ENCODE measurements at regions of chr14 and their contacts with region 1.

Region 1: DNA sequence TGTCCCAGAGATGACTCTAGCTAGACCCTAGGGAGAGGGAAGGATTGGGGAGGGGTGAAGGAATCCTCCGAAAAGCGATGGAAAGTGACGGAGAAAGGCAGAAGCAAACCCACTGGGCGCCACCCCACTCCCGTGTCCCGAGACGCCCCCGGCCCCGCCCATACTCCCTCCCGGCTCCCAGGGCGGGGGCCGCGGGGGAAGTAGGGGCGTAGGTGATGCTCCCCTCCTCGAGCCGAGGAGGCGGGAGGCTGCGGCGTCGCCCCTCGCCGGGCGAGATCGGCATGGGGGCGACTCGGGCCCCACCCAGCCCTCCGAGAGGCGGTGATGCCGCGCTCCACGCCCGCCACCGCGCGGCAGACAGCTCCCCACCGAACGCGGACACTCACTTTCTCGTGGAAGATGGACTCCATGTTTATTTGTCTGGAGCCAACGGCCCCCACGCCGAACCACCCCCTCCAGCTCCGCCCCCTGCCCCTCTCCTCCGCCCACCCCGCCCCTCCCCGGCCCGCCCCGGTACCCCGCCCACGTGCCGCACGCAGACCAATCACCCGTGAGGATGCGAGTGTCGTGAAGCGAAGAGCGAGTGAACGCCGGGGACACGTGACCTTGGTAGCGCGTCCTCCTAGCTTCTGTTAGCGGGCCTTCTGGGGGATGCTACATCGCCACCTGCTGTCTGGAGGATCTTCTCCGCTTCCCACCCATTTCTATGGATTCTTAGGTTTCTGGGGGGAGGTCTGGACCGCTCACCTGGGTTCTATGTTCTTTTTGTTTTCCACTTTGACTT is at the start of gene ATXN3:
- DNase-seq: peak; percentile 98
- ATAC-seq: peak; percentile 97
- H3K4me3 Mint-ChIP-seq: peak within 1 kb of the TSS; percentile 91
- H3K27ac Mint-ChIP-seq: peak within 1 kb of the TSS; percentile 89
- H3K4me1 Mint-ChIP-seq: peaks cover 36% of the 10 kb centered on the region
- H3K27me3 Mint-ChIP-seq: no peaks in the 10 kb centered on the region
- total RNA-seq, gene ATXN3: 26.6 to 30.2 TPM

Region 2: DNA sequence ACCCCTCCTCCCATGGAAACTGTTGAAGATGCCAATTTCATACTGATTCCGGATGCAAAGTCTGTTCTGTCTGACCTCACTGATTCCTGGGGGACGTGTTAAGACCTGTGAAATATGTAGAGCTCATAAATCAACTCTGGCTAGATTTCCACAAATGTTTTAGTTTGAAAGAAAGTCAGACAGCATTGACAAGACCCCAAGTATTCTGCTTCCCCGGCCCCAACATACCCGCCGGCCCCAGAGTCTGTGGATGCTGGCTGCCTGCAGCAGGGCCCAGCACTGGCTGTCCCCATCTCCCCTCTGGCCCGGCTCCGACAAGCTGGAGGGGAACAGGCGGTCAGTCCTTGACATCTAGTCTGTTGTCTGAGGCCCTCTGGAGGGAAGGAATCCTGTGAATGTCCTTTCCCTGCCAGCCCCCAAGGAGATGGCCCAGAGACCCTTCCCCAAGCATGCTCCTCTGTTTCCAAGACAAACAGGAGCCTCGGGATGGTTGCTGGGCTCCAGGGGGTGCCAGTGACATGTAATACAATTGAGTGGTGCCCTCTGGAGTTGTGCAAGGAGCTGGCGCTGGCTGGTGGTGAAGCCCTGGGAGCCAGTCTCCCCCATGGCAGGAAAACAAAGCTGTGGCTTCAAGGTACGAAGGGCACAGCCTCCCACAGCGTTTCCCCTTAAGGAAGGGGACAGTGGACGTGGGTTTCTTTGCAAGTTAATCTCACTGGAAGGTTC is 181.2 kb before region 1 on chr14:
- CTCF ChIA-PET with region 1: no interaction called
- DNase-seq: no peak
- ATAC-seq: no peak
- H3K4me3 Mint-ChIP-seq: no peak overlapping the region
- H3K27ac Mint-ChIP-seq: no peak overlapping the region
- H3K4me1 Mint-ChIP-seq: no peaks in the 10 kb centered on the region
- H3K27me3 Mint-ChIP-seq: no peaks in the 10 kb centered on the region

Region 3: DNA sequence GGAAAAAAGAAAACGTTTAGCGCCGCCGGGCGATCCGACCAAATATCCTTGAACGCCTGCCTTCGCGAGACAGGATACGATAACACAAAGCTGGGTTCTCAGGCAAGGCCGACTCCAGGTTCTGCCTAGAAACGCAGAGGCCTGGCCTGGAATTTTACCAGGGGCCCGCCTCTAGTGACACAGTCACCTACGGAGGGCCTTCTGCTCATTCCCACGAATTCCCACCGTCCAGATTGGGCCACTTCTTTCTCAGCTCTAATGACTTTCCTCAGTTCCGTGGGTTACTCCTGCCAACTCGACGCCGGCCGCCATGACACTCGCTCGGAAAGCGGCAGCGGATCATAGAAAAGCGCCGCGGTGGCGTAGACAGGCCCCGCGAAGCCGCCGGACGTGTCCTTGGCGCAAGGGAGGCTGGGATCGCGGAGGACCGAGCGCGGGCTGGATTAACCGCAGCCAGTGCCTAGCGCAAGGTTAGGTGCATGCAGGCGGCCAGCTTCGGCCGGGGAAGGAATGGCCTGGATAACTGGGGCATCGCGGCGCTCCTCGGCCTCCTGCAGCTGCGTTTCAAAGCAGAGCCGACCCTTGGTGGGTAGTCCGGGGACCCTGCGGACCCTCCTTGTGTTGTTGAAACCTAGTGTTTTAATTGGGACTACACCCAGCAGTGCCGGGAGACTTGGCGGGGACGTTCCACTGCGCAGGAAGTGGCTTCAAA is 66.5 kb before region 1 on chr14 and contains the start of gene TRIP11:
- CTCF ChIA-PET with region 1: interaction called, 24 read pairs
- DNase-seq: peak; percentile 98
- ATAC-seq: peak; percentile 96
- H3K4me3 Mint-ChIP-seq: peak within 1 kb of the TSS; percentile 97
- H3K27ac Mint-ChIP-seq: peak within 1 kb of the TSS; percentile 96
- H3K4me1 Mint-ChIP-seq: peaks cover 37% of the 10 kb centered on the region
- H3K27me3 Mint-ChIP-seq: no peaks in the 10 kb centered on the region
- total RNA-seq, gene TRIP11: 39.2 to 47.4 TPM

Region 4: DNA sequence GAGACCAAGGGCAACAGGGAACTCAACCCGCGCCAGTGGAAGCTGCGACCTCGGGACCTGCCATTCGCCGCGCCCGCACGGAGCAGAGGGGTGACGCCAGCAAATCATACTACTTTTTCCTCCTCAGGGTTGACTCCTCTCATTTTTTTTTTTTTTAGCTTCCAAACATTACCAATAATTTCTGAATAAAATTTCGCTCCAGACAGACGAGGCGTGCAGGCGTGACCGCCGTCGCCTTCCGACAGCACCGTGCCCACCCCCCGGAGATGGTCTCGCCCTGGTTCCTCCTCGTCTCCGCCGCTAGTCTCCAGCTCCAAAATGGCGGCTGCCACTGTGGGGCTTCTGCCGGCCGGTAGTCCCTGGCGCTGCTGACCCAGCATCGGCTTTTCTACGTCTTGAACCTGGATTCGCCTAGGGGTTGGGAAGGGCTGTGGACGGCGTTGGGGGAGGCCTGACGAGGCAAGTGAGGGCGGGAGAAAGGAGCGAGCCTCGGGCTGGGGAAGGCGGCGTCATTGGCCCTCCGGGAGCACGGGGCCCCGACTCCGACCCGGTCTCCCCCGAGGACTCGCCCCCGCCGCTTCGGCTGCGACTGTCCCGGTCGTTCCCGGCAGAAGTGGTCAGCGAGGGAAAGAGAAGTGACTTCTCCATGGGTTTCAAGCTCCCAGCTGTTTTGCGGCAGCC is 15.5 kb after region 1 on chr14 and contains the starts of genes CPSF2 and NDUFB1:
- CTCF ChIA-PET with region 1: interaction called, 145 read pairs
- DNase-seq: peak; percentile 88
- ATAC-seq: peak; percentile 93
- H3K4me3 Mint-ChIP-seq: peak within 1 kb of the TSS; percentile 97
- H3K27ac Mint-ChIP-seq: peak within 1 kb of the TSS; percentile 100
- H3K4me1 Mint-ChIP-seq: peaks cover 52% of the 10 kb centered on the region
- H3K27me3 Mint-ChIP-seq: no peaks in the 10 kb centered on the region
- total RNA-seq, gene CPSF2: 75.5 to 107 TPM
- total RNA-seq, gene NDUFB1: 109 to 115 TPM

Measured in activated CD8-positive, alpha-beta memory T cell treated with anti-CD3 and anti-CD28 coated beads, Interleukin-2, amount 10 ng/mL, durations not matched to agents 7 days and 5 days (primary cell).